ENCODE measurements at regions of chr11 and their contacts with region 1.

Region 1: GRCh38 chr11:62591448-62592145 is at the start of gene TUT1:
- DNase-seq: peak; percentile 99
- ATAC-seq: peak; percentile 92
- H3K4me3 Mint-ChIP-seq: peak within 1 kb of the TSS; percentile 99
- H3K27ac Mint-ChIP-seq: peak within 1 kb of the TSS; percentile 90
- H3K4me1 Mint-ChIP-seq: peaks cover 51% of the 10 kb centered on the region
- H3K27me3 Mint-ChIP-seq: no peaks in the 10 kb centered on the region
- total RNA-seq, gene TUT1: 24.7 to 29.6 TPM

Region 2: GRCh38 chr11:62487738-62488551 is 103.7 kb before region 1 on chr11:
- CTCF ChIA-PET with region 1: no interaction called
- DNase-seq: no peak
- ATAC-seq: no peak
- H3K4me3 Mint-ChIP-seq: no peak overlapping the region
- H3K27ac Mint-ChIP-seq: no peak overlapping the region
- H3K4me1 Mint-ChIP-seq: peaks cover 6% of the 10 kb centered on the region
- H3K27me3 Mint-ChIP-seq: no peaks in the 10 kb centered on the region

Region 3: GRCh38 chr11:62536301-62536957 is 55.2 kb before region 1 on chr11:
- CTCF ChIA-PET with region 1: no interaction called
- DNase-seq: no peak
- ATAC-seq: no peak
- H3K4me3 Mint-ChIP-seq: no peak overlapping the region
- H3K27ac Mint-ChIP-seq: no peak overlapping the region
- H3K4me1 Mint-ChIP-seq: peaks cover 46% of the 10 kb centered on the region
- H3K27me3 Mint-ChIP-seq: no peaks in the 10 kb centered on the region

Region 4: DNA sequence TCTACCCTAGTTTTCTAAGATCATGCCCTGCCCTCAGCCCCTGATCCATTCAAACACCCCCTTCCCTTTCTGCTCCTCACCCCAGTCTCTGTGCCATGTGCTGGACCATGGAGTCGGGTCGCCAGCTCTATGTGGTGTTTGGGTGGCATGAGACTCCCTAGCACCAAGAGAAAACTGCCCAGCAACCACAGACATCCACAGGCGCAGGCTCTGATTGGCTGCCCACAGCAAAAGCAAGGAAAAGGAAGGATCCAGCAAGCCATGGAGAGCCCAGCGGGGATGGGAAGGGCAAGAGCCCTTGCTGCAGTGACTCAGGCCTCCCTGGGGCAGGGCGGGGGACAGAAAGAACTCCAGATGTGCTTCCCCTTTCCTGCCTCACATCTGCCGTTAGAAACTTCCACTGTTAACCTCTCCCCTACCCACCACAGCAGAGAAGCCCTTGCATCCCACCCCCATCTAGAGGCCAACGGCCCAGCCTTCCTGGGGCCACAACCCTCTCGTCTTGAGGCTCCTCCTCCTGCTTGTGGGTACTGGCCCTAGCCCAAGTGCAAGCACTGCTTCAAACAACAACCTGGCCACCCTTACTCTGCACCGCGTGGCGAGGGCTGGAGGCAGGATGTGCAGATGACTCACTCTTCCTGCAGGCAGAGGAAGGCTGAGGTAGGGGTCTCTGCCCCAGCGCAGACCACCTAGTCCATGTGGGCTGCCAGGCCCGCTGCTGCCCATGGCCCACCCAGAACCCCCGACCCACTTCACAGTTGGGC is 35.3 kb before region 1 on chr11:
- CTCF ChIA-PET with region 1: interaction called, 17 read pairs
- DNase-seq: peak; percentile 98
- ATAC-seq: peak; percentile 64
- H3K4me3 Mint-ChIP-seq: peak overlapping the region; percentile 65
- H3K27ac Mint-ChIP-seq: peak overlapping the region; percentile 96
- H3K4me1 Mint-ChIP-seq: peaks cover 96% of the 10 kb centered on the region
- H3K27me3 Mint-ChIP-seq: peaks cover 2% of the 10 kb centered on the region

Region 5: GRCh38 chr11:62612366-62613290 is 21.0 kb after region 1 on chr11 and contains the starts of genes EML3 and ROM1:
- CTCF ChIA-PET with region 1: interaction called, 54 read pairs
- DNase-seq: peak; percentile 95
- ATAC-seq: peak; percentile 83
- H3K4me3 Mint-ChIP-seq: peak within 1 kb of the TSS; percentile 100
- H3K27ac Mint-ChIP-seq: peak within 1 kb of the TSS; percentile 99
- H3K4me1 Mint-ChIP-seq: peaks cover 48% of the 10 kb centered on the region
- H3K27me3 Mint-ChIP-seq: no peaks in the 10 kb centered on the region
- total RNA-seq, gene EML3: 132 to 133 TPM
- total RNA-seq, gene ROM1: 1.1 to 1.5 TPM

Region 6: DNA sequence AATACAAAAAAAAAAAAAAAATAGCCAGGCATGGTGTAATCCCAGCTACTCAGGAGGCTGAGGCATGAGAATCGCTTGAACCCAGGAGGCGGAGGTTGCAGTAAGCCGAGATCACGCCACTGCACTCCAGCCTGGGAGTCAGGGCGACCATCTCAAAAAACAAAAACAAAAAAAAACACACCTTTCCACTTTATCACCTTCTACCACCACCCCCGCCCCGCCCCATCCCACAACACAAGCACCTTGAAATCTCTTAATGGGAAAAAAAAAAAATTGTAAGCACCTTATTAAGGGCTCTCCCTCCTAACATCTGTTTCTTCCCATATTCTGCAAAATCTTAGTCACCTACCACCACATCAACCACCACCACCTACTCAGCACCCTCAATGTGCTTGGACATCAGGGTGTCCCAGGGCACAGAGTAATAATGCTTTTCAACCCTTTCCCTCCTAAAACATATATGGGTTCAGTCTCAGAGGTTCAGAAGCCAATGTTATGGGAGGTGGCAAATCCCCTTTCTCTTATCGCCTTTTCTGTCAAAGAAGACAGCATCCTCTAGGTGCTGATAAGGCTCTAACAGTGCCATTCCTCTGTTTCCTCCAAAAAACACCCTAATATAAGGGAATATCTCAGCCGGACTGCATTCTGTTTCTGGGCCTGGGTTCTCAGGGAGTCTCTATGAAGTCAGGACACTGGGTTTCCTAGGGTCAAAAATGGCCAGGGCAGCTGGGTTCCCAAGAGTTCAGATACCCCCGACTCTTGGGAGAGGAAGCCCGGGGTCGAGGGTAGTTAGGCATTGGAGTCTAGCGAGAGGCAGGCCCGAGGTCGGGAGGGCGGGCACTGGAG is 60.8 kb after region 1 on chr11:
- CTCF ChIA-PET with region 1: interaction called, 15 read pairs
- DNase-seq: no peak
- ATAC-seq: peak; percentile 2
- H3K4me3 Mint-ChIP-seq: peak overlapping the region; percentile 86
- H3K27ac Mint-ChIP-seq: peak overlapping the region; percentile 85
- H3K4me1 Mint-ChIP-seq: peaks cover 35% of the 10 kb centered on the region
- H3K27me3 Mint-ChIP-seq: no peaks in the 10 kb centered on the region

Region 7: GRCh38 chr11:62671575-62672389 is 80.2 kb after region 1 on chr11 and contains the starts of genes LBHD1 and UQCC3:
- CTCF ChIA-PET with region 1: interaction called, 50 read pairs
- DNase-seq: peak; percentile 96
- ATAC-seq: peak; percentile 83
- H3K4me3 Mint-ChIP-seq: peak within 1 kb of the TSS; percentile 95
- H3K27ac Mint-ChIP-seq: peak within 1 kb of the TSS; percentile 96
- H3K4me1 Mint-ChIP-seq: peaks cover 54% of the 10 kb centered on the region
- H3K27me3 Mint-ChIP-seq: no peaks in the 10 kb centered on the region
- total RNA-seq, gene LBHD1: 17.7 to 27.5 TPM
- total RNA-seq, gene UQCC3: 7.2 to 9.0 TPM